CD4-positive, alpha-beta memory T cell (primary cell): ENCODE measurements at regions of chr12 and their contacts with region 1.

Region 1: DNA sequence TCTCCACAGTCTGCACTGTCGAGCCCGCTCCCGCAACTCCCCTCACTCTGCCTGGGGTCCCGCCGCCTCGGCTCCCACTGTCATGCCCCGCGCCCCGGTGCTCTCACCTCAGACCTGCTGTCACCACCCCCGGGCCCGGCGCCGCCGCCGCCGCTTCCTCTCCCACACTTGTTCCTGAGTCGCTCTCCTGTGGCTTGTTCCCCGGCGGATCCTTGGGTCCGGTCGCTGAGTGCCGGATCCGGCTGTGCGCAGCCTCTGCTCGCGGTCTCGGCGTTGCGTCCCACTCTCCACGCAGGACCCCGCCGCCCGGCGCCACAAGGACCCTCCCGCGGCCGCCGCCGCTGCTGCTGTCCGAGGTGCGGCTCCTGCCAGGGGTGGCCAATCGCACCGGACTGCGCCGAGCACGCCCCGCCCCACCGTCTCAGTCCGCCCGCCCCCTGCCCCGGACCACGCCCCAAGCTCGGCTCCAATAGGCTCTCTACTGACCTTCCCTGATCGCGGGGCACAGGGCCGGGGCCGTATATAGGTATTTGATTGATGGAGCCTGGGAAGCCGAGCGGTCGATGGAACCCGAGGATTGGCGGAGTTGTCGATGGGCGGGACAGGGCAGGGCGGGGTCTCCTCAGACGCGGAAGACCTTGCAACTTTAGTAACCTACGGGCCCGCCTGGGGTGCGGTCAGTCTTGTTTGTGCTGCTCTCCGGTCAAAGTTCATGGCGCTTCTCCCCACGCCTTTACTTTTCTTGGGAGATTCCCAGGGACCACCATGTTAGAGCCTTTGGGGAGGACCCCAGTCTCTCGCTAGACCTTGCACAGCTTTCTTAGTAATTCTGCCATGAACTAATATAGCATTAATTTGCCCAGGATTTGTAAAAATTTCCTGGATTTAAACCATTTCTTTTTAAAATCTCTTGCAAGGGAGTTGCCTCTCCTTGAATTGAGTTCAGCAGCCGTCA is at the start of gene TAOK3:
- DNase-seq: peak; percentile 96 to 98 (median 97)
- H3K4me3 ChIP-seq: peak within 1 kb of the TSS; percentile 81 to 87
- H3K4me3 Mint-ChIP-seq: peak within 1 kb of the TSS; percentile 89 to 93 (median 92)
- H3K27ac ChIP-seq: peak within 1 kb of the TSS; percentile 68
- H3K27ac Mint-ChIP-seq: peak within 1 kb of the TSS; percentile 93 to 100 (median 96)
- H3K4me1 ChIP-seq: peaks cover 46% of the 10 kb centered on the region
- H3K4me1 Mint-ChIP-seq: peaks cover 25 to 68% (median 45%) of the 10 kb centered on the region in 4 donors
- H3K27me3 ChIP-seq: no peaks in the 10 kb centered on the region
- H3K27me3 Mint-ChIP-seq: no peaks in the 10 kb centered on the region
- total RNA-seq, gene TAOK3: 74.8 to 76.0 TPM

Region 2: GRCh38 chr12:116737774-116738700 is 1634.8 kb before region 1 on chr12 and contains the starts of genes RNFT2 and SPRING1:
- CTCF ChIA-PET with region 1: no interaction called
- POLR2A ChIA-PET with region 1: no interaction called
- intact Hi-C with region 1: loop called (anchors 10 kb)
- DNase-seq: peak; percentile 99
- H3K4me3 ChIP-seq: peak within 1 kb of the TSS; percentile 58 to 98
- H3K4me3 Mint-ChIP-seq: peak within 1 kb of the TSS; percentile 92 to 98 (median 95)
- H3K27ac ChIP-seq: peak within 1 kb of the TSS; percentile 50
- H3K27ac Mint-ChIP-seq: peak within 1 kb of the TSS; percentile 87 to 95 (median 92)
- H3K4me1 ChIP-seq: peaks cover 27% of the 10 kb centered on the region
- H3K4me1 Mint-ChIP-seq: peaks cover 17 to 48% (median 31%) of the 10 kb centered on the region in 4 donors
- H3K27me3 ChIP-seq: no peaks in the 10 kb centered on the region
- H3K27me3 Mint-ChIP-seq: no peaks in the 10 kb centered on the region
- total RNA-seq, gene RNFT2: 4.0 to 5.9 TPM
- total RNA-seq, gene SPRING1: 26.5 to 28.1 TPM

Region 3: GRCh38 chr12:118016424-118017264 is 356.2 kb before region 1 on chr12 and contains the start of gene RFC5:
- CTCF ChIA-PET with region 1: interaction called, 4 read pairs
- POLR2A ChIA-PET with region 1: interaction called, 6 read pairs
- intact Hi-C with region 1: loop called (anchors 1 kb)
- DNase-seq: peak; percentile 95 to 96 (median 96)
- H3K4me3 ChIP-seq: peak within 1 kb of the TSS; percentile 9 to 92
- H3K4me3 Mint-ChIP-seq: peak within 1 kb of the TSS; percentile 90 to 97 (median 91)
- H3K27ac ChIP-seq: peak within 1 kb of the TSS; percentile 66
- H3K27ac Mint-ChIP-seq: peak within 1 kb of the TSS; percentile 87 to 98 (median 90)
- H3K4me1 ChIP-seq: peaks cover 15% of the 10 kb centered on the region
- H3K4me1 Mint-ChIP-seq: peaks cover 12 to 23% (median 17%) of the 10 kb centered on the region in 4 donors
- H3K27me3 ChIP-seq: no peaks in the 10 kb centered on the region
- H3K27me3 Mint-ChIP-seq: peaks cover 0 to 1% of the 10 kb centered on the region in 2 donors
- total RNA-seq, gene RFC5: 17.2 TPM

Region 4: GRCh38 chr12:118135788-118136558 is 236.8 kb before region 1 on chr12 and contains the start of gene PEBP1:
- CTCF ChIA-PET with region 1: interaction called, 44 read pairs
- POLR2A ChIA-PET with region 1: interaction called, 28 read pairs
- intact Hi-C with region 1: loop called (anchors 1 kb)
- DNase-seq: peak; percentile 88 to 91 (median 90)
- H3K4me3 ChIP-seq: peak within 1 kb of the TSS; percentile 61 to 86
- H3K4me3 Mint-ChIP-seq: peak within 1 kb of the TSS; percentile 95 to 99 (median 96)
- H3K27ac ChIP-seq: peak within 1 kb of the TSS; percentile 67
- H3K27ac Mint-ChIP-seq: peak within 1 kb of the TSS; percentile 88 to 98 (median 94)
- H3K4me1 ChIP-seq: peaks cover 29% of the 10 kb centered on the region
- H3K4me1 Mint-ChIP-seq: peaks cover 19 to 54% (median 26%) of the 10 kb centered on the region in 4 donors
- H3K27me3 ChIP-seq: no peaks in the 10 kb centered on the region
- H3K27me3 Mint-ChIP-seq: no peaks in the 10 kb centered on the region
- total RNA-seq, gene PEBP1: 95.9 to 99.1 TPM

Region 5: DNA sequence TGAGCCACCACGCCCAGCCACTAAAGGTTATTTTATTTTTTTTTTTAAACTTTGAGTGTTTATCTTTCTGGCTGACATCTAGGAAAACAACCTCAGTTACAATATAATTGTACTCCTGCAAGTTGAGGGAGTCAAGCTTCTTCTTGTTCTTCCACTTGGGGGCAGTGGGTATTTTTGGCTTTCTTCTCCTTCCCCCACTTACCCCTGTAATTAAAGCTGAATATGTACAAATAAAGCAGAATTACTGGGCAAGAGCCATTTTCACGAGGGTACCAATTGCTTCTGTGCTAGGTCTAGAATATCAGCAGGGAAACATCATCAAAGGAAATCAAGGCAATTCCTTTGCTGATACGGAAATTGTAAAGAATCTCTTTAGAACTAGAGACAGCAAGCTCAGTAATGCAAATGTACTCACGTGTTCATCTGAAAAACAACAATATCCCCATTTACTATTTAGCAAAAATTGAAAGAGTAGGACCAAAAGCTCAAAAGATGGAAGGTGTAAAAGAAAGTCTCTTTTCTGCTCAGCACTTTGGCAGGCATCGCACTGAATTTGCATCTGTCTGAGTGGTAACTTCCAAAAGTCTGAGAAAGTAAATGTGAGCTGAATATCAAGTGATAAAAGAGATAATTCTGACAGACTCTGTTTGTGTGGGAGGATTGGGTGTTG is 72.9 kb before region 1 on chr12:
- CTCF ChIA-PET with region 1: interaction called, 16 read pairs
- POLR2A ChIA-PET with region 1: interaction called, 6 read pairs
- intact Hi-C with region 1: no loop called
- DNase-seq: no peak
- H3K4me3 ChIP-seq: no peak overlapping the region
- H3K4me3 Mint-ChIP-seq: no peak overlapping the region
- H3K27ac ChIP-seq: no peak overlapping the region
- H3K27ac Mint-ChIP-seq: peak overlapping the region in 2 of 7 donors; percentile 11 to 48
- H3K4me1 ChIP-seq: peaks cover 13% of the 10 kb centered on the region
- H3K4me1 Mint-ChIP-seq: peaks cover 31 to 47% (median 35%) of the 10 kb centered on the region in 4 donors
- H3K27me3 ChIP-seq: no peaks in the 10 kb centered on the region
- H3K27me3 Mint-ChIP-seq: no peaks in the 10 kb centered on the region

Region 6: GRCh38 chr12:118715647-118716046 is 342.8 kb after region 1 on chr12:
- CTCF ChIA-PET with region 1: no interaction called
- POLR2A ChIA-PET with region 1: no interaction called
- intact Hi-C with region 1: no loop called
- DNase-seq: no peak
- H3K4me3 ChIP-seq: no peak overlapping the region
- H3K4me3 Mint-ChIP-seq: no peak overlapping the region
- H3K27ac ChIP-seq: no peak overlapping the region
- H3K27ac Mint-ChIP-seq: no peak overlapping the region
- H3K4me1 ChIP-seq: no peaks in the 10 kb centered on the region
- H3K4me1 Mint-ChIP-seq: no peaks in the 10 kb centered on the region
- H3K27me3 ChIP-seq: no peaks in the 10 kb centered on the region
- H3K27me3 Mint-ChIP-seq: peaks cover 0 to 2% of the 10 kb centered on the region in 2 donors

Region 7: GRCh38 chr12:119544765-119545625 is 1172.2 kb after region 1 on chr12:
- CTCF ChIA-PET with region 1: interaction called, 7 read pairs
- POLR2A ChIA-PET with region 1: no interaction called
- intact Hi-C with region 1: loop called (anchors 10 kb)
- DNase-seq: peak; percentile 38 to 54 (median 42)
- H3K4me3 ChIP-seq: no peak overlapping the region
- H3K4me3 Mint-ChIP-seq: no peak overlapping the region
- H3K27ac ChIP-seq: no peak overlapping the region
- H3K27ac Mint-ChIP-seq: no peak overlapping the region
- H3K4me1 ChIP-seq: no peaks in the 10 kb centered on the region
- H3K4me1 Mint-ChIP-seq: no peaks in the 10 kb centered on the region
- H3K27me3 ChIP-seq: no peaks in the 10 kb centered on the region
- H3K27me3 Mint-ChIP-seq: peaks cover 36 to 42% of the 10 kb centered on the region in 2 donors